ENCODE measurements at regions of chr19 and their contacts with region 1.

Region 1: DNA sequence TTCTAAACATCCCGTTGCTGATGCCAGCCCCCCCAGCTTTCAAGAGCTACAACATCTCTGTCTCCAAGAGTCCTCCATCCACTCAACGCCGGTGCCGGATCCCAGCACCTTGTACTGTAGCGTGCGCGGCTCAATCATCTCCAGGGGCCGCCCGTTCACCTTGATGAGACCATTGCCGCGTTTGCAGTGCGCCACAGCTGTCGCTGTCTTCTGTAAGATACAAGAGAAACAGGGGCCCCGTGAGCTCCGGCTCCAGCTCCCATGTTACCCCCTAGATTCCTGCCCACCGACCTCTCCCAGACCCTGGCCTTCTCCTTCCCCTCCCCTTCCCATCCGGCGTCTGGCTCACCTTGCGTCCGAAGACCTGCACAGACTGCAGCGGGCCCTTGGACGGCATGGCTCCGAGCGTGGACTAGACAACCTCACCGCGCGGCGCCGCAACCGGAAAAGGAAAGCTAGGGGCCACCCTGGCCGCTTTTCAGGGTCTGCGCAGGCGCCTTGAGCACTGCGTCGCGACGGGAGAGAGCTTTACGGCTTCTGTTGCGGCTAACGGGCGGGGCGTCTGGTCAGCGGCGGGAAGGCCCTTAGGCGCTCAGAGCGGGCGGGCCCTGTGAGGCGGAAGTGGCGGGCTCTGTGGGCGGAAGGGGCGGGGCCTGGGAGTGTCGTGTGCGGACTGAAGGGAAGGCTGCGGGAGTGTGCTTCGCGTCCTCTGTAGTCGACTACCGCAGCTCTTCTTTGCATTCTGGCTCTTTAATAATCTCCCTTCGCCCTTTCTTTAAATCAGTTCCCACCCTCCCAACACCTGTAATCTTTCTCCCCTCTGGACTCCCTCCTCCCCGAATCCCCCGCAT is at the start of gene RPS16:
- DNase-seq: peak; percentile 99
- H3K4me3 Mint-ChIP-seq: peak within 1 kb of the TSS; percentile 99
- H3K27ac Mint-ChIP-seq: peak within 1 kb of the TSS; percentile 98
- H3K4me1 Mint-ChIP-seq: peaks cover 64% of the 10 kb centered on the region
- H3K27me3 Mint-ChIP-seq: no peaks in the 10 kb centered on the region
- total RNA-seq, gene RPS16: 2,238 to 2,243 TPM

Region 2: GRCh38 chr19:39341719-39342604 is 93.8 kb before region 1 on chr19 and contains the start of gene SAMD4B:
- CTCF ChIA-PET with region 1: interaction called, 10 read pairs
- POLR2A ChIA-PET with region 1: interaction called, 16 read pairs
- DNase-seq: peak; percentile 99
- H3K4me3 Mint-ChIP-seq: peak within 1 kb of the TSS; percentile 98
- H3K27ac Mint-ChIP-seq: peak within 1 kb of the TSS; percentile 95
- H3K4me1 Mint-ChIP-seq: peaks cover 71% of the 10 kb centered on the region
- H3K27me3 Mint-ChIP-seq: no peaks in the 10 kb centered on the region
- total RNA-seq, gene SAMD4B: 53.9 to 54.8 TPM

Region 3: GRCh38 chr19:39397360-39398296 is 38.1 kb before region 1 on chr19:
- CTCF ChIA-PET with region 1: interaction called, 25 read pairs
- POLR2A ChIA-PET with region 1: interaction called, 157 read pairs
- DNase-seq: peak; percentile 95
- H3K4me3 Mint-ChIP-seq: peak overlapping the region; percentile 68
- H3K27ac Mint-ChIP-seq: peak overlapping the region; percentile 96
- H3K4me1 Mint-ChIP-seq: peaks cover 76% of the 10 kb centered on the region
- H3K27me3 Mint-ChIP-seq: no peaks in the 10 kb centered on the region

Region 4: GRCh38 chr19:39474139-39474622 is 38.5 kb after region 1 on chr19:
- CTCF ChIA-PET with region 1: interaction called, 16 read pairs
- POLR2A ChIA-PET with region 1: interaction called, 8 read pairs
- DNase-seq: peak; percentile 66
- H3K4me3 Mint-ChIP-seq: no peak overlapping the region
- H3K27ac Mint-ChIP-seq: no peak overlapping the region
- H3K4me1 Mint-ChIP-seq: peaks cover 11% of the 10 kb centered on the region
- H3K27me3 Mint-ChIP-seq: no peaks in the 10 kb centered on the region

Region 5: GRCh38 chr19:39502640-39503417 is 67.1 kb after region 1 on chr19:
- CTCF ChIA-PET with region 1: interaction called, 14 read pairs
- POLR2A ChIA-PET with region 1: interaction called, 5 read pairs
- DNase-seq: peak; percentile 80
- H3K4me3 Mint-ChIP-seq: no peak overlapping the region
- H3K27ac Mint-ChIP-seq: no peak overlapping the region
- H3K4me1 Mint-ChIP-seq: peaks cover 33% of the 10 kb centered on the region
- H3K27me3 Mint-ChIP-seq: peaks cover 66% of the 10 kb centered on the region

Measured in activated CD4-positive, alpha-beta memory T cell treated with anti-CD3 and anti-CD28 coated beads, Interleukin-2, amount 10 ng/mL, durations not matched to agents 7 days and 5 days (primary cell).